ENCODE measurements at regions of chr5 and their contacts with region 1.

Region 1: GRCh38 chr5:140718241-140718580 is 18.0 kb downstream of the ZMAT2 start:
- DNase-seq: no peak
- H3K4me3 Mint-ChIP-seq: no peak overlapping the region
- H3K27ac Mint-ChIP-seq: no peak overlapping the region
- H3K4me1 Mint-ChIP-seq: peaks cover 2% of the 10 kb centered on the region
- H3K27me3 Mint-ChIP-seq: peaks cover 7% of the 10 kb centered on the region

Region 2: GRCh38 chr5:140244525-140245025 is 473.6 kb before region 1 on chr5:
- CTCF ChIA-PET with region 1: interaction called, 5 read pairs
- intact Hi-C with region 1: loop called (anchors 1 kb)
- DNase-seq: peak; percentile 91
- H3K4me3 Mint-ChIP-seq: no peak overlapping the region
- H3K27ac Mint-ChIP-seq: peak overlapping the region; percentile 65
- H3K4me1 Mint-ChIP-seq: peaks cover 27% of the 10 kb centered on the region
- H3K27me3 Mint-ChIP-seq: no peaks in the 10 kb centered on the region

Region 3: GRCh38 chr5:140362860-140363630 is 355.2 kb before region 1 on chr5:
- CTCF ChIA-PET with region 1: interaction called, 6 read pairs
- intact Hi-C with region 1: loop called (anchors 1 kb)
- DNase-seq: peak; percentile 92
- H3K4me3 Mint-ChIP-seq: peak overlapping the region; percentile 70
- H3K27ac Mint-ChIP-seq: no peak overlapping the region
- H3K4me1 Mint-ChIP-seq: peaks cover 2% of the 10 kb centered on the region
- H3K27me3 Mint-ChIP-seq: no peaks in the 10 kb centered on the region

Region 4: DNA sequence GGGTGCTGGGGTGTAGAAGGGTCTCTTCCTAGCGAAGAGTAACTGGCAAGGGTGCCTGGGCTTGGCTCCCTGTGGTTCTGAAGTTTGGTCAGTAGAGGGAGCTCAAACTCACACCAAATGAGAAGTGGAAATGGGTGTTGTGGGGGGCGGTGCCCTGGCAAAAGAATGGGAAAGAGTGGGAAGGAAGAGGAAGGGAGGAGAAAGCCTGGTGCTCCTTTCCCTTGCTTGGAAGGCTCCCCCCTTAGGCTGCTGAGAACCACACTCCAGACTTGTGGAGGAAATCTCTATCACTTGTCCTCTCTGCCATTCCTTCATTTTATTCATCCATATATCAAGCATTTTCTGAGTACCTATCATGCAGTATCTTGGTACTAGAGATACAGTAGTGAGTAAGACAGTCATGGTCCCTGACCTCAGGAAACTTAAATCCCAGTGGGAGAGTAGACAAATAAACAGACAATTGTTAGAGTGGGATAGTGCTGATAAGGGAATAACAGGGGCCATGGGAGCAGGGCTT is 345.2 kb before region 1 on chr5:
- CTCF ChIA-PET with region 1: interaction called, 7 read pairs
- intact Hi-C with region 1: loop called (anchors 1 kb)
- DNase-seq: peak; percentile 58
- H3K4me3 Mint-ChIP-seq: no peak overlapping the region
- H3K27ac Mint-ChIP-seq: no peak overlapping the region
- H3K4me1 Mint-ChIP-seq: peaks cover 2% of the 10 kb centered on the region
- H3K27me3 Mint-ChIP-seq: no peaks in the 10 kb centered on the region

Region 5: DNA sequence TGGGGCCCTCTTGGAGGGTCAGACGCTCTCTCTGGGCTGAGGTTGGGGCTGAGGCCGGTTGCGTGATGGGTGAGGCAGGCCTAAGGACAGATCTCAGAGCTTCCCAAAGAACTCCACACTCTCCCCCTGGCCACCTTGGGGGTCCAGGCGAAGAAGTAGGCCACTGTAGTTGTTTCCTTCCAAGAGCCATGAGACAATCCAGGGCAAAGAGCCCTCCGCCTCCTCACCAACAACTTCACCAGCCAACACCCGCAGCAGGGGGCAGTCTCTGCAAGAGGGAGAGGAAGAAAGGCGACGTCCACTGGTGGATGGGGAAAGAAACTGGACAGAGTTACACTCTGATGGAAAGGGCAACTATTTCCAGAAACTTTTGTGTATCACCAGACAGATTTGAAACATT is 142.9 kb before region 1 on chr5:
- CTCF ChIA-PET with region 1: no interaction called
- intact Hi-C with region 1: loop called (anchors 1 kb)
- DNase-seq: peak; percentile 44
- H3K4me3 Mint-ChIP-seq: no peak overlapping the region
- H3K27ac Mint-ChIP-seq: no peak overlapping the region
- H3K4me1 Mint-ChIP-seq: peaks cover 8% of the 10 kb centered on the region
- H3K27me3 Mint-ChIP-seq: no peaks in the 10 kb centered on the region